Activated T-helper 2 cell treated with anti-CD3 and anti-CD28 coated beads, Interferon-gamma antibody, Interleukin-2, Interleukin-4, amounts not matched to agents 10 μg/mL and 5 μg/mL and 100 μg/mL, durations not matched to agents 14 hours and 24 hours and 36 hours (primary cell): ENCODE measurements at regions of chr3 and their contacts with region 1.

Region 1: DNA sequence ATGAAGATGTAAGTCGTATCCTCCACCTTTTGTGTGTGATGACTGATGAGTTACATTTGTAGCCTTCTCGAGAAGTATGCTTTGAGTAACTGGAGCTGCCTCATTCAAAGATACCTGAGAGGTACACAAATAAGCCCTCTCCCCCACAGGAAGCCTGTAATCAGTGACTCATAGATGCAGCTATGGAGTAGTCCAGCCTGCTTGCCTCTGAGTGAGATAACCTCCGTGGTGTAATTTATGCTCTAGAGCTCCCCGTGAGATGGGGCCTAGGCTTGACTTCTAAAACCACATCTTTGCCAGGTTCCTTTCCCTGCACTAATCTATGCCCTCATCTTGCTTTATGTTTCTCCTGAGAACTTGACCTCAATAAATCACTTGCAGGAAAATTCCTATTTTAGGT is 291.7 kb downstream of the SUCLG2 start:
- DNase-seq: peak; percentile 18
- H3K4me3 Mint-ChIP-seq: no peak overlapping the region
- H3K27ac Mint-ChIP-seq: peak overlapping the region; percentile 1
- H3K4me1 Mint-ChIP-seq: peaks cover 47% of the 10 kb centered on the region
- H3K27me3 Mint-ChIP-seq: peaks cover 6% of the 10 kb centered on the region

Region 2: DNA sequence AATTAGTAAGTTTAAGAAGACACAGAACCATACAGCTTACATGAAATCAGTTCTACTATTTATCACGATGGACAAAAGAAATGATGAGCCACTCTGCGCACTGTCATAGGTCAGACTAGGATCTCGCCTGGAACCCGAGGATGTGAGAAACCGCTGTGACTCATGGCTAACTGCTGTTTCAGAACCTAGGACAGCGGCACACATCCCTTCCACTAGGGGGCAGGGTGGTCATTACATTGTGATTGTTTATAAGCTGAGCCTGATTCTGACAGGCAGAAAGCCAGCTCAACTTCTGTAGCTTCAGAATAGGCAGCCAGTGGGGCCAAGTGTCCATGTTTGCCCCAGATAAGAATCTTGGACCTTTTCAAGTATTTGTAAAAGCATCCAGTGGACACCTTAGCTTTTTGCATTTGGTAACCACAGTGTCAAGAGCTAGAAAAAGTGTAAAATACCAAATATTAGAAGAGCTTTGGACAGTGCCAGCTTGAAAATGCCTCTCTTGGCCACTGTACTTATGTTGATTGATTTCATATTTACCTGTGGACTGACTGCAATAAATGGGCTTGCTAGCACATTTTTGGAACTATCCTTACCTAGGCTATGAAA is 248.8 kb before region 1 on chr3:
- intact Hi-C with region 1: loop called (anchors 5 kb)
- DNase-seq: peak; percentile 68
- H3K4me3 Mint-ChIP-seq: no peak overlapping the region
- H3K27ac Mint-ChIP-seq: no peak overlapping the region
- H3K4me1 Mint-ChIP-seq: peaks cover 5% of the 10 kb centered on the region
- H3K27me3 Mint-ChIP-seq: peaks cover 2% of the 10 kb centered on the region

Region 3: GRCh38 chr3:67312155-67312554 is 50.5 kb before region 1 on chr3:
- intact Hi-C with region 1: no loop called
- DNase-seq: no peak
- H3K4me3 Mint-ChIP-seq: no peak overlapping the region
- H3K27ac Mint-ChIP-seq: no peak overlapping the region
- H3K4me1 Mint-ChIP-seq: no peaks in the 10 kb centered on the region
- H3K27me3 Mint-ChIP-seq: no peaks in the 10 kb centered on the region

Region 4: GRCh38 chr3:67329358-67329757 is 33.3 kb before region 1 on chr3:
- intact Hi-C with region 1: loop called (anchors 1 kb)
- DNase-seq: no peak
- H3K4me3 Mint-ChIP-seq: no peak overlapping the region
- H3K27ac Mint-ChIP-seq: no peak overlapping the region
- H3K4me1 Mint-ChIP-seq: peaks cover 30% of the 10 kb centered on the region
- H3K27me3 Mint-ChIP-seq: peaks cover 15% of the 10 kb centered on the region

Region 5: DNA sequence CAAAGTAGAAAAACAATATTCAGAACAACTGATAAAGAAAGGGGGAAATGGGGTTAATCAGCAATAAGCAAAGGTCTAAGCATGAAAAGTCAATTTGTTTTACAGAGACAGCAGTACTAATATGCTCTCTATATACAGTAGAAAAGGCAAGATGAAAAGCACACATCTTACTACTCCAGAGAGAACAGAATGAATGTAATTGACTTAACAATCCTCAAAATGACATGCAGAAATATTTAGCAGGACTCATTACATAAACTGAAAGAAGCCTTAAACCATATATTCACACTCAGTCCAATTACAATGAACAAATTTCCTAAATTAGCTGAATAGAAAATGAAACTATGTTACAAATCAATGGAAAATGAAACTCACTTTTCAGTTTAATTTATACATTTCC is 28.1 kb before region 1 on chr3:
- intact Hi-C with region 1: loop called (anchors 1 kb)
- DNase-seq: no peak
- H3K4me3 Mint-ChIP-seq: no peak overlapping the region
- H3K27ac Mint-ChIP-seq: no peak overlapping the region
- H3K4me1 Mint-ChIP-seq: peaks cover 24% of the 10 kb centered on the region
- H3K27me3 Mint-ChIP-seq: peaks cover 13% of the 10 kb centered on the region

Region 6: GRCh38 chr3:67349551-67350174 is 13.0 kb before region 1 on chr3:
- intact Hi-C with region 1: loop called (anchors 1 kb)
- DNase-seq: no peak
- H3K4me3 Mint-ChIP-seq: no peak overlapping the region
- H3K27ac Mint-ChIP-seq: peak overlapping the region; percentile 29
- H3K4me1 Mint-ChIP-seq: peaks cover 10% of the 10 kb centered on the region
- H3K27me3 Mint-ChIP-seq: peaks cover 9% of the 10 kb centered on the region